ENCODE measurements at regions of chr6 and their contacts with region 1.

Region 1: DNA sequence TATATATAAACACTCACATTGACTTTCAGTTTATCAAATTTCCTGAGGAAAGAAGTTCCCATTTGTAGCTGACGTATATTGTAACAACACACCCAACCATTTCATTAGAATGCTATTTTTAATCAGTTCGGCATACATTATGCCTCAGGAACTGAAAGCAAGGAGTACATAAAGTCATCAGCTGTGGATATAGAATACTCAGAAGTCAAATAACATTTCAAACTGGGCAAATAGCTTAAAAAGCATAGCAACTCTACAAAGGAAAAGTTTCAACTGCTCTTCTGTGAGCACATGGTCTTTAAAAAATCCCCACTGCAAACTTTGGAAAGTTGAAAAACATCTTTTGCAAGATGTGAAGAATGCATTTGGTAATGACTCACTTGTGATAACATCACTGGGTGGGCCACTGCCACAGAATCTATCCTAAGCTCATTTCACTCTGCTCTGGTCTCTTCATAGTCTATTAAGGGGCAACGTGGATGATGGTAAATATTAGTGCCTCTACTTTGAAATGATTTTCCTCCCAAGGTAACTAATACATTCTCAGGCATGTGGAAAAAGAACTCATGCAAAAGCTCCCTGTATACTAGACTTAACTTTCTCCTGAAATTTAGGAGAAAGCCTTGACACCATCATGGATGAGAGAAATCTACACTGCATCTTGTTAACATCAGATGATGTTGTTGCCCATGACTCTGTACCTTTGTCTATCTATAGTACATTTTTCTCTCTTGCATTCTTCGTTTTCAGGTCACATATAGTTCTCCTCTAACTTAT is 49.2 kb downstream of the FYN start:
- DNase-seq: no peak
- H3K4me3 Mint-ChIP-seq: peak overlapping the region; percentile 18
- H3K27ac Mint-ChIP-seq: peak overlapping the region; percentile 58
- H3K4me1 Mint-ChIP-seq: peaks cover 52% of the 10 kb centered on the region
- H3K27me3 Mint-ChIP-seq: no peaks in the 10 kb centered on the region

Region 2: GRCh38 chr6:111812060-111813038 is 11.7 kb before region 1 on chr6:
- CTCF ChIA-PET with region 1: interaction called, 12 read pairs
- POLR2A ChIA-PET with region 1: interaction called, 16 read pairs
- DNase-seq: no peak
- H3K4me3 Mint-ChIP-seq: no peak overlapping the region
- H3K27ac Mint-ChIP-seq: peak overlapping the region; percentile 72
- H3K4me1 Mint-ChIP-seq: peaks cover 68% of the 10 kb centered on the region
- H3K27me3 Mint-ChIP-seq: no peaks in the 10 kb centered on the region

Region 3: DNA sequence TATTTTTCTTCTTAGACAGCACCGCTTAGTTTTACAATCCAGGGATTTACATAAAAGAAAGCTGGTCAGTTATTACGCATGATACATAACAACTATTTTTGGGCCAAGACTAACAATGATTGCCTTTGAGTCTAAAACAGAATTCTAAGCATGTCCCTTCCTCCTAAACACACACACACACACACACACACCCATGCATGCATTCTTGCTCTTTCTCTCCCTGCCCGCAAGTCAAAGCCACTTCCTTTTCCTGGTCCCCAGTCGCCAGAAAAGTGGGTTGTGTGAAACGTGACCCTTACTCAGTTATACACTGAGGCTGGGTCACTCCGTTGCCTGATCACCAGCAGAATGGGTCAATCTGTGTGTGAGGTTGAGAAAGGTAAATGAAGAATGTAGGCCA is 17.8 kb after region 1 on chr6:
- CTCF ChIA-PET with region 1: interaction called, 5 read pairs
- POLR2A ChIA-PET with region 1: interaction called, 20 read pairs
- DNase-seq: peak; percentile 77
- H3K4me3 Mint-ChIP-seq: no peak overlapping the region
- H3K27ac Mint-ChIP-seq: no peak overlapping the region
- H3K4me1 Mint-ChIP-seq: peaks cover 36% of the 10 kb centered on the region
- H3K27me3 Mint-ChIP-seq: no peaks in the 10 kb centered on the region

Region 4: GRCh38 chr6:112054555-112055160 is 230.6 kb after region 1 on chr6:
- CTCF ChIA-PET with region 1: no interaction called
- POLR2A ChIA-PET with region 1: no interaction called
- DNase-seq: no peak
- H3K4me3 Mint-ChIP-seq: no peak overlapping the region
- H3K27ac Mint-ChIP-seq: no peak overlapping the region
- H3K4me1 Mint-ChIP-seq: no peaks in the 10 kb centered on the region
- H3K27me3 Mint-ChIP-seq: peaks cover 8% of the 10 kb centered on the region